CD14-positive monocyte (primary cell): ENCODE measurements at regions of chr2 and their contacts with region 1.

Region 1: GRCh38 chr2:74529357-74530238 is at the starts of genes AUP1 and HTRA2:
- DNase-seq: peak; percentile 91 to 98 (median 96)
- H3K4me3 ChIP-seq: peak within 1 kb of the TSS; percentile 65 to 96 (median 87)
- H3K4me3 Mint-ChIP-seq: peak within 1 kb of the TSS; percentile 94 to 98
- H3K27ac ChIP-seq: peak within 1 kb of the TSS; percentile 91 to 95
- H3K27ac Mint-ChIP-seq: peak within 1 kb of the TSS; percentile 95 to 98 (median 96)
- H3K4me1 ChIP-seq: peaks cover 28 to 46% of the 10 kb centered on the region in 2 donors
- H3K4me1 Mint-ChIP-seq: peaks cover 42% of the 10 kb centered on the region
- H3K27me3 ChIP-seq: no peaks in the 10 kb centered on the region
- H3K27me3 Mint-ChIP-seq: peaks cover 0 to 5% (median 3%) of the 10 kb centered on the region in 3 donors
- CTCF ChIP-seq: no peak
- polyA plus RNA-seq, gene AUP1: 130 to 385 (median 149) TPM
- polyA plus RNA-seq, gene HTRA2: 11.3 to 20.5 (median 15.0) TPM

Region 2: DNA sequence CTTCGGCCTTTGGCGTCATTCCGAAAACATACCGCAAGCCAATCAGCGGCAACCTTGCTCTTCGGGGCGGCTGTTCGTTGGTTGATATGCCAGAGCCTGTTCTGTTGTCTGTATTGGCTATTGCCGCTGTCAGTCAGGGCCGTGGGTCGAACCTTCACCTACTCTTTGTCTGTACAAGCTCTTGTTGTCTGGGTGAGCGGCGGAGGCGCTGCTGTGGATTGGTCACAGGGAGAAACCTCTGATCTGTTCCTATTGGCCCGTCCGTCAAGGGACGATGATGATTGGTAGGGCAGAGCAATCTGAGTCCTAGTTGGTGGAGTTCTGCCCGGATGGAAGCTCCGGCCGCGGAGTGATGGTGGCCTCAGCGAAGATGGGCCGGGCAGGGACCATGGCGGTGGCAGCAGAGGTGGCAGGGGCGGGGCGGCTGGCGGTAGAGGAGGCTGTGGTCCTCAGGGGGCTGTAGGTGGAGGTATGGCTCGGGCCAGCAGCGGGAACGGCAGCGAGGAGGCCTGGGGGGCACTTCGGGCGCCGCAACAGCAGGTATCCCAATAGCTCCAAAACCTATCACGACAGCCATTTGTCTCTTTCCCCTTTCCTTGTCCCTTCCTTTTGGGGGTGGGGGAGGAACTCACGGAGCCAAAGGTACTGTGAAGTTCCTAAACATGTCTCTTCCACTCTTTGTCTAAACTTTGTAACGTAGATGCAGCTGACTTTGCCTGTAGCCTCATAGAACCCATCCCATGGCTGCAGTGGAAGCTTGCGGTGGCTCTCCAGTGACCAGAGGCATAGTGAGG is 71.3 kb before region 1 on chr2 and contains the start of gene WBP1:
- intact Hi-C with region 1: loop called (anchors 5 kb)
- DNase-seq: peak; percentile 100
- H3K4me3 ChIP-seq: peak within 1 kb of the TSS; percentile 74 to 90 (median 80)
- H3K4me3 Mint-ChIP-seq: peak within 1 kb of the TSS; percentile 93 to 94
- H3K27ac ChIP-seq: peak within 1 kb of the TSS; percentile 81 to 92
- H3K27ac Mint-ChIP-seq: peak within 1 kb of the TSS; percentile 87 to 97 (median 94)
- H3K4me1 ChIP-seq: peaks cover 35 to 41% of the 10 kb centered on the region in 2 donors
- H3K4me1 Mint-ChIP-seq: peaks cover 46% of the 10 kb centered on the region
- H3K27me3 ChIP-seq: no peaks in the 10 kb centered on the region
- H3K27me3 Mint-ChIP-seq: peaks cover 0 to 2% (median 0%) of the 10 kb centered on the region in 3 donors
- CTCF ChIP-seq: no peak
- polyA plus RNA-seq, gene WBP1: 23.9 to 109 (median 31.0) TPM

Region 3: GRCh38 chr2:74482801-74483674 is 46.6 kb before region 1 on chr2 and contains the starts of genes CCDC142 and TTC31:
- intact Hi-C with region 1: loop called (anchors 2 to 5 kb)
- DNase-seq: peak; percentile 93 to 95 (median 94)
- H3K4me3 ChIP-seq: peak within 1 kb of the TSS; percentile 61 to 94 (median 86)
- H3K4me3 Mint-ChIP-seq: peak within 1 kb of the TSS; percentile 100
- H3K27ac ChIP-seq: peak within 1 kb of the TSS; percentile 84 to 90
- H3K27ac Mint-ChIP-seq: peak within 1 kb of the TSS; percentile 90 to 100 (median 99)
- H3K4me1 ChIP-seq: peaks cover 24 to 32% of the 10 kb centered on the region in 2 donors
- H3K4me1 Mint-ChIP-seq: peaks cover 29% of the 10 kb centered on the region
- H3K27me3 ChIP-seq: no peaks in the 10 kb centered on the region
- H3K27me3 Mint-ChIP-seq: peaks cover 0 to 2% (median 0%) of the 10 kb centered on the region in 3 donors
- CTCF ChIP-seq: peak; percentile 88
- polyA plus RNA-seq, gene CCDC142: 2.2 to 15.8 (median 3.7) TPM
- polyA plus RNA-seq, gene TTC31: 19.6 to 46.5 (median 21.3) TPM

Region 4: DNA sequence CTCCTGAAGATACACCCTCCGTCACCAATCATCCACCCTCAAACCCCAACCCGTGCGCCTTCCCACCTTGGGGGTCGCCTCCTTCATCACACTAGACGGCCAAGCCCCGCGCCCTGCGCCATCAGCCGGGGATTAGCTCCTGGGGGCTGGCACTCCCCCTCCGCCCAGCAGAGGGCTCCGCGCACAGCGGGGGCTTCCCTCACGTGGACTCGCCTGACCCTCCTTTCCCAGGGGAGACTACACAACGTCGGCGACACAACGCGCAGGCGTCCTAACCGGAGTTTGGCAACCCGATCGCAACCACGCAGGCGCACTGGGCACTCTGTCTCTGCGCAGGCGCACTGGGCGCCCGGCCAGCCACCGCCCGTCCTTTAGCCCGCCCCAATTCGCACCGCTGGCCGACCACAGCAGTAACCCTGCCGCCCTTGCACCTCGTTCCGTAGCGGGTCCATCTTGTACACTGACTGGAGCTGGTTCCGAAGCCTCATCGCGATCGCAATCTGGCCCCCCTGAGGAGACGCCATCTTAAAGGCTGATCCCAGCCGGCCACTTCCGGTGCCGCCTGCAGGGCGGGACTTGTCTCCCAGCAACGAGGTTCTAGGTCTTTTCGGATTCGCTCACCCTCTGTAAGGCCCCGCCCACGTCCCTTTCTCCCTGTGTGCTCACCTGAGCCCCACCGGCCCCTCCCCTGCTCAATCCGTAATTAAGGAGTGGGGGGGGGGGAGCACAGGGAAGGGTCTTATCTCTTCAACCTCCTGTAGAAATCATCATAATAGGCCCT is 22.3 kb before region 1 on chr2 and contains the start of gene PCGF1:
- intact Hi-C with region 1: loop called in 1 of 2 experiments (anchors 1 kb)
- DNase-seq: peak; percentile 96 to 99 (median 96)
- H3K4me3 ChIP-seq: peak within 1 kb of the TSS; percentile 61 to 88 (median 79)
- H3K4me3 Mint-ChIP-seq: peak within 1 kb of the TSS; percentile 96 to 100
- H3K27ac ChIP-seq: peak within 1 kb of the TSS; percentile 95 to 98
- H3K27ac Mint-ChIP-seq: peak within 1 kb of the TSS; percentile 98 to 100 (median 100)
- H3K4me1 ChIP-seq: peaks cover 52 to 58% of the 10 kb centered on the region in 2 donors
- H3K4me1 Mint-ChIP-seq: peaks cover 59% of the 10 kb centered on the region
- H3K27me3 ChIP-seq: peaks cover 25 to 46% of the 10 kb centered on the region in 2 donors
- H3K27me3 Mint-ChIP-seq: peaks cover 37 to 57% (median 44%) of the 10 kb centered on the region in 3 donors
- CTCF ChIP-seq: no peak
- polyA plus RNA-seq, gene PCGF1: 18.0 to 30.5 (median 20.5) TPM

Region 5: GRCh38 chr2:74587664-74588277 is 58.2 kb after region 1 on chr2:
- intact Hi-C with region 1: loop called in 1 of 2 experiments (anchors 10 kb)
- DNase-seq: peak; percentile 65 to 69 (median 69)
- H3K4me3 ChIP-seq: no peak overlapping the region
- H3K4me3 Mint-ChIP-seq: no peak overlapping the region
- H3K27ac ChIP-seq: no peak overlapping the region
- H3K27ac Mint-ChIP-seq: peak overlapping the region in 2 of 7 donors; percentile 46 to 69
- H3K4me1 ChIP-seq: peaks cover 31 to 37% of the 10 kb centered on the region in 2 donors
- H3K4me1 Mint-ChIP-seq: peaks cover 39% of the 10 kb centered on the region
- H3K27me3 ChIP-seq: no peaks in the 10 kb centered on the region
- H3K27me3 Mint-ChIP-seq: peaks cover 0 to under 1% (median 0%) of the 10 kb centered on the region in 3 donors
- CTCF ChIP-seq: peak; percentile 83